ENCODE measurements at regions of chr15 and their contacts with region 1.

Region 1: DNA sequence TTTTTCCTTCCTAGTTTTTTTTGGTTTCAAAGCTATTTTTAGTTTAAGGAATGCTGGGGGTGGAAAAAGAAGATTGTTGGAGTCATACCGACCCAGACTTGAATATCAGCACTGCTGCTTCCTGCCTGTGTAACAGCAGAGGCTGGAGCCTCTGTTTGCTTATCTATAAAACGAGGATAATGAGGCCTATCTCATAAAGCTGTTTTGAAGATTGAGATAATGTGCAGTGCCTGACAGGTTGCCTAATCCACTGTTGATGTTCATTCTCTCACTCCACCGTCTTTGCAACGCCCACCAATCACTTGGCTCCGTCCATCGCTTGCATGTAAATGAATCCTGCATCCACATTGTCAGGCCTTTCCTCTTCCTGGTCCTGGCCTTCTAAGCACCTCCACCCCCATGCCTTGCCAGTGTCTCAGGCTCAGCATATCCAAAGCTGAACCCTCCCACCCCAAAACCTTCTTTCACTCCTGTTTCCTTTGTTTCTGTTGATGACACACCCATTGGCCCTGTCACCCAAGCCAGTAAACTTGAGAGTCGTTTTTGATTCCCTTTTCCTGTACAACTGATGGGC is 94.9 kb downstream of the MEX3B start:
- DNase-seq: no peak
- ATAC-seq: no peak
- H3K4me3 Mint-ChIP-seq: no peak overlapping the region
- H3K27ac Mint-ChIP-seq: no peak overlapping the region
- H3K4me1 Mint-ChIP-seq: peaks cover 4% of the 10 kb centered on the region
- H3K27me3 Mint-ChIP-seq: peaks cover 4% of the 10 kb centered on the region

Region 2: DNA sequence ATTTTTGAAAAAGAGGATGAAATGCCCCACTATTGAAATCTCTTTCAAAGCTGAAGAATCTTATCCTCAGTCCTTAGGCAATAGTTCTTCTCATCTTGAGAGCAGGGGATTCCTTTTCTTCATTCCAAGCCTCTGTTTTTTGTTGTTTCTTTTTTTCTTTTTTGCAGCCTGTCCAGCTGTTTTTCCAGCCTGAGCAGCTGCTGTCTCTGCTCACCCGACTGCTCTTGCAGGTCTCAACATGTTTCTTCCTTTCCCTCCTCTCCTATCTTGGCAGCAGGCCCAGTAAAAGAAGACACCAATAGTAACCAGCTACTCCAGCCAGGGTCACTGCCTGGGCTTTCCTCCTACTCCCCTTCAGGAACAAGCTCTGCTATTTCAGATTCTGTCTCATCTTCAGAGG is 71.1 kb after region 1 on chr15:
- CTCF ChIA-PET with region 1: interaction called, 3 read pairs
- POLR2A ChIA-PET with region 1: no interaction called
- intact Hi-C with region 1: loop called in 1 of 2 experiments (anchors 10 kb)
- DNase-seq: no peak
- ATAC-seq: no peak
- H3K4me3 Mint-ChIP-seq: no peak overlapping the region
- H3K27ac Mint-ChIP-seq: no peak overlapping the region
- H3K4me1 Mint-ChIP-seq: no peaks in the 10 kb centered on the region
- H3K27me3 Mint-ChIP-seq: peaks cover 6% of the 10 kb centered on the region